Cardiac septum (tissue), 1 donor: ENCODE measurements at regions of chr11 and their contacts with region 1.

Region 1: GRCh38 chr11:19071255-19071654 is 10.7 kb upstream of the MRGPRX2 start:
- DNase-seq: no peak

Region 2: DNA sequence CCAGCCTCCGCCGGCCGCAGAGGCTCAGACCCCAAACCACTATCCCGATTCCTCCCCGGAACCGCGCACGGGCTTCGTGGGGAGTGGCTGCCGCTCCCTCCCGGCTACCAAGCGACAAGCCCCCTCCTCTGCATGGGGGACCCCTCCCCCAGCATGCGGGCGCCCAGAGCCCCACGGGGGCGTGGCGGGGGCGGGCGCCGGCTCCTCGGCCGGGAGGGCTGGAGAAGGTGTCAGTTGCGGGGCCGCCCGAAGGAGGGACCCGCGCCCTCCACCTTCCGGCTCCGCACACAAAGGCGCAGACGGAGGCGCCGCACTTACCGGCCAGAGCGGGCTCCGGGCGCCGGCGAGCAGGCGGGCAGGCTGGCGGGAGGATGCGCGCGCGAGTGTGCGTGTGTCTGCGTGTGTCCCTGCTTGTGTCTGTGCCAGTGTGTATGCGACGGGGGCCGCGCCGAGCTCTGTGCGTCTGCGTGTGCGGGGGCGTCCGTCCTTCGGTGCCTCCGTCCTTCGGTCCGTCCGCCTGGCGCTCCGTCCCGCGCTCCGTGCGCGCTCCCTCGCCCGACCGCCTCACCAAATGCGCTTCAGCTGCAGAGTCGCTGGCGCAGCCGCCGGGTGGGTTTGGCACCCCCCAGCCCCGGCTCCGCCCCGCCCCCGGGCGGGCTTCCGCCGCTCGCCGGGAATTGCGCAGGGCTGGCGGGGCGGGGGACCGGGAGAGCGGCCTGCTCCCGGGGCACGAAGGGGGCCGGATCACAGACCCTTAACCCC is 279.9 kb before region 1 on chr11 and contains the start of gene PTPN5:
- intact Hi-C with region 1: no loop called
- DNase-seq: no peak
- total RNA-seq, gene PTPN5: 3.8 TPM

Region 3: GRCh38 chr11:19105011-19105410 is 33.8 kb after region 1 on chr11:
- intact Hi-C with region 1: loop called (anchors 5 kb)
- DNase-seq: no peak

Region 4: DNA sequence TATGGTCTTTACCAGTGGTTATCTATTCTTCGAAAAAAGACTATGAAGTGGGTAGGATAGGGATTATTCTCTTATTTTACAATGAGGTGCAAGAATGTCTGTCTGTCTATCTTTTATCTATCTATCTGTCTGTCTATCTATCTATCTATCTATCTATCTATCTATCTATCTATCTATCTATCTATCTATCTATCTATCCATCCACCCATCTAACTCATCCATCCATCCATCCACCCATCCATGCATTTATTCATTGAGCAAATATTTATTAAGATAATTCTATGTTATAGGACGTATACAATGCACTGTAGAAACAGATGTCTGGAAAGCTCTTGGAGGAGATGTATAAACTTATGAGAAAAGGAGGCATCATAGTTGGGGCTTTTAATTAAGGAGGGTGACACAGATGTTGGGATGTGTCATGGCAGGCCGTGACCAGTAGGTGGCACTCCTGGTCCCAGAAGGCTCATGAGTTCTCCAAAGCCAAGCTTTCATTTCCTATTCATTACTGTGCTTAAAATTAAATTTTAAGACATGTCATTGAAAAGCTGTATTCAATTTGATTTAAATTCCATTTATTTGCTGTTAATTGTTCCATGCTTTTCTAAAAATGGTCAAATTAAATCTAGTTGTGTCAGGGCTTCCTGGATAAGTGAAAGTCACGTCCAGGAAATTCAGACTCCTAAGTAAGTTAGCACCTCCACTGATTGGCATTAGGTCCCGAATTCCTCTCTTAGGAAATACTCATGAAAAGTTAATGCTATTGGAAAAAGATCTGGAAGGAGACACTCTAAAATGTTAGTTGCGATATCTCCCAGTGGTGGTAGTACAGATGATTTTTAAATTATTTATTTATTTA is 188.5 kb after region 1 on chr11:
- intact Hi-C with region 1: loop called (anchors 10 kb)
- DNase-seq: no peak